HEK293T (cell line): ENCODE measurements at regions of chr16 and their contacts with region 1.

Region 1: DNA sequence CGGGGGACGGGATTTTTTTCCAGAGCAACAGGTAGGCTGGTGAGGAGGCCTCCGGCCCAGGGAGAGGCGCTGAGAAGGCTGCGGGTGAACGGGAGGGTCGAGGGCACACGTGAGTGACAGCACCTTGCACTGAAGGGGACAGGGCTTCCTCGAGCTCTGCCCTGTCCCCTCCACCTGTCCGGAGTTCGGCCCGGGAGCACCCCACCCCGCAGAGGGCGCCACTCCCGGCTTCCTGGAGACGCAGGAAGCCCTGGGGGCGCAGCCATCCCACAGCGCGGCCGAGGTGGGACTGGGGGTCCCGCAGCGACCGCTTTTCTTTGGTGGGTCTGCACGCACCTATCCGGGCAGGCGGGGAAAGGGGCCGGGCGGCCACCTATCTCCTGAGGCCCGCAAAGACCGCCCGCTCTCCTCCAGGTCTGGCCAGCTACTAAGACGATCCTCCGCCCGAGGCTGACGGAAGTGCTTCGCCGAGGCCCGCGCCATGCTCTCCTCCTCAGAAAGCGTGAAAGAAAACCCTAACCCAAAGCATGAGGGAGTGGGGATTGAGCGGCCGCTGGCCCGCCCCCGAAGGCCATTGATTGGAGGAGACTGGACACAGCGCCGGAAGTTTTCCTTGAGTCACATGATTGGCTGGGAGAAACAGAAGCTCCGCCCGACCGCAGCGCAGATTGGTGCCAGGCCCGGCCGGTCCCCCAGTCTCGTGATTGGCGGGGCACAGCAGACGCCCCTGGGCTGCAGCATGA is 34.3 kb downstream of the DDX19A start:
- DNase-seq: peak; percentile 94

Region 2: DNA sequence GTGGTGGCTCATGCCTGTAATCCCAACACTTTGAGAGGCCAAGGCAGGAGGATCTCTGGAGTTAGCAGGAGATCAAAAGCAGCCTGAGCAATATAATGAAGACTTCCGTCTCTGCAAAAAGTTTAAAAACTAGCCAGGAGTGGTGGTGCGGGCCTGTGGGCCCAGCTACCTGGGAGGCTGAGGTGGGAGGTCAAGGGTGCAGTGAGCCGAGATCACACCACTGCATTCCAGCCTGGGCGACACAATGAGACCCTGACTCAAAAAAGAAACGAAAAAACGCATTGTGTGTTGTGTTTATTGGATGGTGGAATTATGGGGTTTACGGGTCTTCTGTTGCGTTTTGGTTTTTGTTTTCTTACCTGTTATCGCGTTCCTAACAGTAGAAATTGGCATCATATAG is 35.2 kb before region 1 on chr16:
- CTCF ChIA-PET with region 1: no interaction called
- POLR2A ChIA-PET with region 1: interaction called, 29 read pairs
- DNase-seq: no peak

Region 3: DNA sequence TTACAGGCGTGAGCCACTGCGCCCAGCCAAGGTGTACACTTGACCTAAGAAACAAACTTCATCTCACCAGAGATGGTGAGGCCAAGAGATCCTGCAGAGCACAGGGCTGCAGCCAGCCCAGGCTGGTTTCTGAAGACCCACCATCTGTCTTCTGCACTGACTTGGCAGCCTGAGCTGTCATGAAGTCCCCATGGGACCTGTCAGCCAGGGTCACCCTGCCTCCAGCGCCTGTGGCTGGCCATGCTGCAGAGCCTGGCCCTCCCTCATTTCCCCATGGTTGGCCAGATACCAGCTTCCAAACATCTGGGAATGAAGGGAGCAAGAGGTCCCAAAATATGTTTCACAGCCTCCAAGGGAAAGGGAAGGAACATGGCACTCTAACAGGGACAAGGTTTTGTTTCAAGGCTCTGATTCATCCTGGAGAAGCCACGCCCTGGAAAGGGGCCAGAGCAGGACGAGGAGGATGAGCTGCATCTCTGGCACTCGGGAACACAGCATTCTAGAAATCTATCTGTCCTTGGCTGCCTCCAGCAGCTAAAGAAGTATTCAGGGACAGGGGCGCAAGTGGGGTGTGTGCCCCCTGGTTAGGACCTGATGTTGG is 10.9 kb after region 1 on chr16:
- CTCF ChIA-PET with region 1: interaction called, 4 read pairs
- POLR2A ChIA-PET with region 1: interaction called, 24 read pairs
- DNase-seq: no peak

Region 4: GRCh38 chr16:70438969-70439862 is 58.2 kb after region 1 on chr16 and contains the start of gene ST3GAL2:
- CTCF ChIA-PET with region 1: no interaction called
- POLR2A ChIA-PET with region 1: interaction called, 27 read pairs
- DNase-seq: peak; percentile 93

Region 5: GRCh38 chr16:70454222-70455034 is 73.4 kb after region 1 on chr16 and contains the start of gene FCSK:
- CTCF ChIA-PET with region 1: interaction called, 4 read pairs
- POLR2A ChIA-PET with region 1: interaction called, 14 read pairs
- DNase-seq: peak; percentile 84